PC-3 (cell line): ENCODE measurements at regions of chr3 and their contacts with region 1.

Region 1: DNA sequence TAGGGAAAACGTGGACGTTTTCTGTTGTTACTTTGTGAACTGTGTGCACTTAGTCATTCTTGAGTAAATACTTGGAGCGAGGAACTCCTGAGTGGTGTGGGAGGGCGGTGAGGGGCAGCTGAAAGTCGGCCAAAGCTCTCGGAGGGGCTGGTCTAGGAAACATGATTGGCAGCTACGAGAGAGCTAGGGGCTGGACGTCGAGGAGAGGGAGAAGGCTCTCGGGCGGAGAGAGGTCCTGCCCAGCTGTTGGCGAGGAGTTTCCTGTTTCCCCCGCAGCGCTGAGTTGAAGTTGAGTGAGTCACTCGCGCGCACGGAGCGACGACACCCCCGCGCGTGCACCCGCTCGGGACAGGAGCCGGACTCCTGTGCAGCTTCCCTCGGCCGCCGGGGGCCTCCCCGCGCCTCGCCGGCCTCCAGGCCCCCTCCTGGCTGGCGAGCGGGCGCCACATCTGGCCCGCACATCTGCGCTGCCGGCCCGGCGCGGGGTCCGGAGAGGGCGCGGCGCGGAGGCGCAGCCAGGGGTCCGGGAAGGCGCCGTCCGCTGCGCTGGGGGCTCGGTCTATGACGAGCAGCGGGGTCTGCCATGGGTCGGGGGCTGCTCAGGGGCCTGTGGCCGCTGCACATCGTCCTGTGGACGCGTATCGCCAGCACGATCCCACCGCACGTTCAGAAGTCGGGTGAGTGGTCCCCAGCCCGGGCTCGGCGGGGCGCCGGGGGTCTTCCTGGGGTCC is at the start of gene TGFBR2:
- DNase-seq: peak; percentile 98
- ATAC-seq: peak; percentile 90
- H3K4me3 ChIP-seq: peak within 1 kb of the TSS; percentile 94
- H3K27ac ChIP-seq: peak within 1 kb of the TSS; percentile 88
- H3K4me1 ChIP-seq: peaks cover 49% of the 10 kb centered on the region
- H3K27me3 ChIP-seq: no peaks in the 10 kb centered on the region
- CTCF ChIP-seq: no peak; the same call in 1 of the 2 replicates
- total RNA-seq, gene TGFBR2: 48.2 and 55.9 TPM in 2 replicates

Region 2: DNA sequence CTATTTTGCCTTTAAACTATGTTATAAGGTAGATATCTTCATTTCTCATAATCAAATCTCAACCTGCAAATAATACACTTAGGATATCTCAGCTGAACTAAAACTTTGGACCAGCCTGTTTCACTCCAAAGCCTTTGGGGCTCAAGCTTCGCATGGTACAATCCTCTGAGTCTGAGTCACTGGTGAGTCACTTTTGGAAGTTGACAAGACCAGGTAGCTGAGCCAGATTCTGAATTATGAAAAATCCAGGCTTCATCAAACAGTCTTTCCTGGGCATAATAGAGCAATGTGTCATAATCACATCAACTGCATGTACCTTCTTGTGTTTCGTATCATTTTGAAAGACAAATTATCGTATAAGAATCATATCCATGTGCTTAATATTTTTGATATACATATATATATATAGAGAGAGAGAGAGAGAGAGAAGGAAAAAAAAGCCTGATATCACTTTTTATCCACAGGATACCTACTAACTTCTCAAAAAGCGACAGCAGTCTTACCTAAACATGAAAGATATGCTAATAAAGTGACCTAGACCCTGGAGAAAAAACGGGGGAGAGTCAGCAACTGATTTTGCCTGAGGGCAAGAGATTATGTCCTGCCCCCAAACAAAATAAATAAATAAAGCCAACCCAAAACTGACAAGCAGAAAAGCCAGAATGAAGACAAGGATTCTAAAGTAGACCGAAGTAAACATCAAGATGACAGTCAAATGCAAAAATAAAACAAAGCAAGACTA is 264.0 kb before region 1 on chr3:
- CTCF ChIA-PET with region 1: no interaction called
- POLR2A ChIA-PET with region 1: interaction called, 3 read pairs
- intact Hi-C with region 1: loop called (anchors 2 kb)
- DNase-seq: peak; percentile 99
- ATAC-seq: peak; percentile 64
- H3K4me3 ChIP-seq: peak overlapping the region; percentile 28; the same call in 1 of the 2 replicates
- H3K27ac ChIP-seq: peak overlapping the region; percentile 98
- H3K4me1 ChIP-seq: peaks cover 59% of the 10 kb centered on the region
- H3K27me3 ChIP-seq: no peaks in the 10 kb centered on the region
- CTCF ChIP-seq: no peak

Region 3: DNA sequence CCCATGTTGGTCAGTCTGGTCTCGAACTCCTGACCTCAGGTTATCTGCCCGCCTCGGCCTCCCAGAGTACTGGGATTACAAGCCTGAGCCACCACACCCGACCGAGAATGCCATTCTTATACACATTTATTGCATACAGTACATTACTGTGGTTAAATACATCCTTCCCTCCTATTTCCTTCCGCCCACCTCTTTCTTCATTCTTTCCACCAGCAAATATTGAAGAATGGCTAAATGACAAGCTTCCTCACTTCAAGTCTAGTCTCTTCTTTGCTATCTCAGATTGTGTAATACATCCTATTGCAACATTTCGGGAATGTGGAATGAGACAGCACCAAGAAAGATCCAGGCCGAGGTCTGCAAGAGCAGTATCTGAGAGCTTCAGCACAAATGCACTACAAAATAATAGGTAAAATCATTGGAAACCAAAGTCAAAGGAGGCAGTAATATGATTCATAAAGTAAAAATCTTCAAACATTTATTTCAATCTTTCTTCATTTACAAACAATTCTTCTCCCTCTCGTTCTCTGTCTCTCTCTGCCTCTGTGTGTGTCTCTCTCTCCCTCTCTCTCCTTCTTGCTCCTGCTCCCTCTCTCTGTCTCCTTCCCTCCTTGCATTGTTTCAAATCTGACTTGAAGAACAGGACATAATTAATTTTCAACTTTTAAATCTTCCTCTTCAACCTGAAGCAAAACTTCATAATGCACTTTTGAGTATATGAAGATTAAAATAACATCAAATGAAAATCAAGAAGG is 94.8 kb before region 1 on chr3:
- CTCF ChIA-PET with region 1: no interaction called
- POLR2A ChIA-PET with region 1: interaction called, 8 read pairs
- intact Hi-C with region 1: loop called (anchors 2 kb)
- DNase-seq: peak; percentile 98
- ATAC-seq: peak; percentile 74
- H3K4me3 ChIP-seq: no peak overlapping the region
- H3K27ac ChIP-seq: peak overlapping the region; percentile 71
- H3K4me1 ChIP-seq: peaks cover 43% of the 10 kb centered on the region
- H3K27me3 ChIP-seq: no peaks in the 10 kb centered on the region
- CTCF ChIP-seq: no peak

Region 4: DNA sequence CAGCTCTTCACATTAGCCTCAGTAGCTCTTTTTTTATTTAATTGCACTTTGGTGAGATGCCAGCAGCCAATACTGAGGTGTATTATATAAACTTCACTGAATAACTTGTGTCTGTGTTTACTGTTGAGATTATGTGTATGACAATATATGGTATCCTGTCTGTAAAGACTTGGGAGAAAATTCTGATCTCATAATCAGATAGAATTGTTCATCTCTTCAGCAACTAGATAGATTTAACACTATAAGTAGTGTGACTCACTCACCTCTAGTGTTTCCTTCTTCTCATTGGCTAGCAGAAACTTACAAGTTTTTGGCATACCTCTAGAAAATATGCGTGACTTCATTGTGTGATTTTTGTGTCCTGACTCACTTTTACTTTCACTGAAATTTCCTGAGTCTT is 67.7 kb before region 1 on chr3:
- CTCF ChIA-PET with region 1: interaction called, 5 read pairs
- POLR2A ChIA-PET with region 1: interaction called, 15 read pairs
- intact Hi-C with region 1: loop called (anchors 2 kb)
- DNase-seq: peak; percentile 96
- ATAC-seq: peak; percentile 95
- H3K4me3 ChIP-seq: no peak overlapping the region; the same call in 1 of the 2 replicates
- H3K27ac ChIP-seq: peak overlapping the region; percentile 99
- H3K4me1 ChIP-seq: peaks cover 23% of the 10 kb centered on the region
- H3K27me3 ChIP-seq: no peaks in the 10 kb centered on the region
- CTCF ChIP-seq: no peak

Region 5: DNA sequence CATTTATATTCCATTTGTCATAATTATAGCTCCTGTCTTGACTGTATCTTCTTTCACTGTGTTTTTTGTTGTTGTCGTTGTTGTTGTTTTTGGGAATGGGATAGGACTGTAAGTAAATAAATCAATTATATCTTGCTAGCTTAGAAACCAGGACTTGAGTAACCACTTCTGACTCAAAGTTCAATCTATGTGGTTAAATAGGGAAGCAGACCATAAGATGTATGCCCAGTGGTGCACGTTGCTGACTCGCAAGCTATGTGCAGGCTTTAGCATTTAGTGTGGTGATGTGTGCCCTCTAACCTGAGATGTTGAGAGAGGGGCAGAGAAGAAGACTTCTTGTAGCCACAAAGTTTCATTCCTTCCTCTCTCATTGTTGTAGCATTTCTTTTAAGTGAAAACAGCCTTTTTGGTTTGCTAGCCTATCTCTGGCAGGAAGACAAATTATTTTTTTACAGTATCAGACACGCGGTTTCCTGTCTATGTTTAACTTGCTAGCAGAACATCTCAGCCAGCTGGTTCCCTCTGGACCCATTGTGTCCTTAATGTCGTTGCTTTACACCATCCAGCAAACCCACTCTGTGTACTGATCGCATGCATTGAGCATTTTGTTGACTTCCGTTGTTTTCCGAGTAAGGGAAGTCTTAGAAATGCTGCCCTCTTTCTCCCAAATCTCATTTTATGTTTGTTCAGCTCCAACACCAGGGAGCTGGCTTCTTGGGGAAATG is 52.0 kb after region 1 on chr3:
- CTCF ChIA-PET with region 1: no interaction called
- POLR2A ChIA-PET with region 1: interaction called, 10 read pairs
- intact Hi-C with region 1: loop called (anchors 2 kb)
- DNase-seq: peak; percentile 83
- ATAC-seq: peak; percentile 58
- H3K4me3 ChIP-seq: peak overlapping the region; percentile 23
- H3K27ac ChIP-seq: peak overlapping the region; percentile 87
- H3K4me1 ChIP-seq: peaks cover 65% of the 10 kb centered on the region
- H3K27me3 ChIP-seq: no peaks in the 10 kb centered on the region
- CTCF ChIP-seq: no peak